ENCODE measurements at regions of chr4 and their contacts with region 1.

Region 1: DNA sequence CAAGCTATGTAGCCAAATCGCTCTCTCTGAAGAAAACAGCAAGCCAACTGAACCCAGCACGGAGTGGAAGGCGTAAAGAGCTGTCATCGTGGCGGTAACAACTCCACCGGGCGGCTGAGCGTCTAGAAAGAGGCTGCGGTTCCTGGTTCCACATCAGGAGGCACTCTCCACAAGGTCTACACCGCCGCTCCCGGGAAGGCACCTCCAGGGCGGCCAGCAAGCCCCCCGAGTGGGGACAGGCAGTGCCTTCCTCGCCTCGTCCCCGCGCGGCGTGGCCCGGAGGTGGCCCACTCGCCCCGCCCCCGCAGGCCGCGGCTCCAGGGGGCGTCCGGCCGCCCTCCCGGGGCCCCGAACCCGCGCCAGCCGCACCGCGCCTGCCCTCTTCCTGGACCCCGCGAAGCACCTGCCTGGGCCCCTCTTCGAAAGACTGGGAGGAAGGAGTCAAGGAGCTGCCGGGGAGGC is 755 bp downstream of the KLHL8 start:
- DNase-seq: peak; percentile 84

Region 2: GRCh38 chr4:86934771-86935565 is 284.7 kb before region 1 on chr4 and contains the start of gene AFF1:
- intact Hi-C with region 1: loop called in 1 of 2 experiments (anchors 10 kb)
- DNase-seq: peak; percentile 98
- total RNA-seq, gene AFF1: 89.5 to 97.5 TPM

Region 3: DNA sequence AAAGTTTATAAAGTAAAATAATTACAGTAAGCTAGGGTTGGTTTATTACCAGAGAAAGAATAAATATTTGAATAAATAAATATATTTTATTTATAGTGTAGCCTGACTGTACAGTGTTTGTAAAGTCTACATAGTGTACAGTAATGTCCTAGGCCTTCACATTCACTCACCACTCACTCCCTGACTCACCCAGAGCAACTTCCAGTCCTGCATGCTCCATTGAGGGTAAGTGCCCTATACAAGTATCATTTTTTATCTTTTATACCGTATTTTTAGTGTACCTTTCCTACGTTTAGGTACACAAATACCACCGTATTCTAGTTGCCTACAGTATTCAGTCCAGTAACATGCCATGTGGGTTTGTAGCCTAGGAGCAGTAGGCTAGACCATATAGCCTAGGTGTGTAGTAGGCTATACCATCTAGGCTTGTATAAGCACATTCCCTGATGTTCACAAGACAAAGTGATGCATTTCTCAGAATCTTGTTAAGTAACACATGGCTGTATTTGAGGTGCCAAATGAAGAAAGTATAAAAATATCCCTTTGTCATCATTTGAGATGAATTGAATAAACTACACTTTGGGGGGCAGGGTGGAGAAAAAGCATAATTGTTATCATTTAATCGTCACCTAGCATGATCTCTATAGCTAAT is 15.5 kb after region 1 on chr4:
- intact Hi-C with region 1: no loop called
- DNase-seq: no peak